ENCODE measurements at regions of chr11 and their contacts with region 1.

Region 1: GRCh38 chr11:6234387-6235107 is at the start of gene FHIP1B:
- DNase-seq: peak; percentile 97 to 100 (median 99)
- ATAC-seq: peak; percentile 90
- H3K4me3 ChIP-seq: peak within 1 kb of the TSS; percentile 90
- H3K4me3 Mint-ChIP-seq: peak within 1 kb of the TSS; percentile 98
- H3K27ac ChIP-seq: peak within 1 kb of the TSS; percentile 68 to 85
- H3K27ac Mint-ChIP-seq: peak within 1 kb of the TSS; percentile 87
- H3K4me1 ChIP-seq: peaks cover 24% of the 10 kb centered on the region
- H3K4me1 Mint-ChIP-seq: peaks cover 49% of the 10 kb centered on the region
- H3K27me3 ChIP-seq: no peaks in the 10 kb centered on the region
- H3K27me3 Mint-ChIP-seq: no peaks in the 10 kb centered on the region
- CTCF ChIP-seq: no peak
- total RNA-seq, gene FHIP1B: 26.7 to 27.7 TPM

Region 2: DNA sequence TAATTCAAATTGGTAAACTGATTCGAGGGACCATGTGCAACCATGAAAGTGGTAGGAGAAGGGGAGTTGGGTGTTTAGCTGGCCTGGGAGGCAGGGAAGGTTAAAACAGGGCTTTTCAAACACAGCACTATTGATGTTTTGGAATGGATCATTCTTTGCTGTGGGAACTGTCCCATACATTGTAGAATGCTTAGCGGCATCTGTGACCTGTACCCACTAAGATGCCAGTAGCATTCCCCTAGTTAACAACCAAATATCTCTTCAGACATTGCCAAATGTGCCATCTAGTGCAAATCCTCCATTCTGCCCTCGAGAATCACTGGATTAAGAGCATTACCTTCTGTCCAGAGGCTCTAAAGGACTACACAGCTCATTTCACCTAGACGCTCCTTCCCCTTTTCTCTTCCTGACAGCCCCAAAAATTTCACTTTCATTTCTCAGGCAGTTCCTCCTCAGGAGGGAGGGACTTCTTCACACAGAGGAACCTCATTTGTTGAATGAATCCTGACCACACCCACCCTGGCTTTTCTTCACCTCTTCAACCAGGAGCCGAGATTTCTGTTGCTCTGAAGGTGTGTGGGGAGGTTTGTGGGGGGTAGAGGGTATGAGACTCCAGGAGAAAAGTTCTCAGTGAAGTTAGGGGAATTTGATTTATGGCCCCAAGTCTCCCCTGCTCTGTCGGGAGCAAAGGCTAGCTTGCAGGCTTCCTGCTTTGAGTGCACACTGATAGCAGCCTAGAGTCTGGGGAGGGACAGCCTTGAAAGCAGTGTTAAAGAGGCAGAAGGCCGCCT is 609.9 kb before region 1 on chr11 and contains the start of gene TRIM34:
- CTCF ChIA-PET with region 1: no interaction called
- POLR2A ChIA-PET with region 1: no interaction called
- intact Hi-C with region 1: loop called in 1 of 2 experiments (anchors 10 kb)
- DNase-seq: peak; percentile 18 to 87 (median 47)
- ATAC-seq: peak; percentile 98
- H3K4me3 ChIP-seq: peak within 1 kb of the TSS; percentile 63
- H3K4me3 Mint-ChIP-seq: peak within 1 kb of the TSS; percentile 90
- H3K27ac ChIP-seq: peak within 1 kb of the TSS; percentile 43 to 50
- H3K27ac Mint-ChIP-seq: peak within 1 kb of the TSS; percentile 84
- H3K4me1 ChIP-seq: peaks cover 27% of the 10 kb centered on the region
- H3K4me1 Mint-ChIP-seq: peaks cover 53% of the 10 kb centered on the region
- H3K27me3 ChIP-seq: no peaks in the 10 kb centered on the region
- H3K27me3 Mint-ChIP-seq: no peaks in the 10 kb centered on the region
- CTCF ChIP-seq: no peak
- total RNA-seq, gene TRIM34: 3.0 to 3.5 TPM

Region 3: DNA sequence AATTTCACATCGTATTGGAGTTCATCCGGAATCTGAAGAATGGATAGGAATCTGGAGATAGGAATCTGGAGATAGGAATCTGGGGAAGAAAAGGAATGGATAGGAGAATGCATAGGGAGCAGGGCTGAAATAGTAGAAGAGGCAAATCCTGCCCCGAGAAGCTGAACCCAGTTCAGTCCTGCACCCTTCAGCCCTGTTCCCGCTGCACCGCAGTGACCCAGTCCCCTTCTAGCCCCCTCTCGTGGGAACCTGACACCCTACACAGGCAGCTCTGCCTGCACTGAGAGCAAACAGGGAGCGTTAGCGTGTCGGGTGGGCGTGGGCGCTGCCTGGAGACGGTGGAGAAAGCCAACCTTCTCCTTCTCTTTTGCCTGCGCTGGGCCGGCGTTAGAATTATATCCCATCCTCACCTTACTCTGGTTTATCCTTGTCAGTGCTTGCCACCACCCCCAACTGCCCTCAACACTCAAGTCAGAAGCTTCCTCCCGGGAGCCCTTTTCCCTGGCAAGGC is 24.1 kb after region 1 on chr11:
- CTCF ChIA-PET with region 1: no interaction called
- POLR2A ChIA-PET with region 1: interaction called, 11 read pairs
- intact Hi-C with region 1: no loop called
- DNase-seq: peak in 2 of 14 experiments; percentile 25 to 34
- ATAC-seq: peak; percentile 19
- H3K4me3 ChIP-seq: peak overlapping the region; percentile 44
- H3K4me3 Mint-ChIP-seq: peak overlapping the region; percentile 82
- H3K27ac ChIP-seq: no peak overlapping the region
- H3K27ac Mint-ChIP-seq: no peak overlapping the region
- H3K4me1 ChIP-seq: peaks cover 20% of the 10 kb centered on the region
- H3K4me1 Mint-ChIP-seq: peaks cover 5% of the 10 kb centered on the region
- H3K27me3 ChIP-seq: peaks cover 36 to 54% of the 10 kb centered on the region in 2 experiments
- H3K27me3 Mint-ChIP-seq: peaks cover 1% of the 10 kb centered on the region
- CTCF ChIP-seq: no peak

Region 4: DNA sequence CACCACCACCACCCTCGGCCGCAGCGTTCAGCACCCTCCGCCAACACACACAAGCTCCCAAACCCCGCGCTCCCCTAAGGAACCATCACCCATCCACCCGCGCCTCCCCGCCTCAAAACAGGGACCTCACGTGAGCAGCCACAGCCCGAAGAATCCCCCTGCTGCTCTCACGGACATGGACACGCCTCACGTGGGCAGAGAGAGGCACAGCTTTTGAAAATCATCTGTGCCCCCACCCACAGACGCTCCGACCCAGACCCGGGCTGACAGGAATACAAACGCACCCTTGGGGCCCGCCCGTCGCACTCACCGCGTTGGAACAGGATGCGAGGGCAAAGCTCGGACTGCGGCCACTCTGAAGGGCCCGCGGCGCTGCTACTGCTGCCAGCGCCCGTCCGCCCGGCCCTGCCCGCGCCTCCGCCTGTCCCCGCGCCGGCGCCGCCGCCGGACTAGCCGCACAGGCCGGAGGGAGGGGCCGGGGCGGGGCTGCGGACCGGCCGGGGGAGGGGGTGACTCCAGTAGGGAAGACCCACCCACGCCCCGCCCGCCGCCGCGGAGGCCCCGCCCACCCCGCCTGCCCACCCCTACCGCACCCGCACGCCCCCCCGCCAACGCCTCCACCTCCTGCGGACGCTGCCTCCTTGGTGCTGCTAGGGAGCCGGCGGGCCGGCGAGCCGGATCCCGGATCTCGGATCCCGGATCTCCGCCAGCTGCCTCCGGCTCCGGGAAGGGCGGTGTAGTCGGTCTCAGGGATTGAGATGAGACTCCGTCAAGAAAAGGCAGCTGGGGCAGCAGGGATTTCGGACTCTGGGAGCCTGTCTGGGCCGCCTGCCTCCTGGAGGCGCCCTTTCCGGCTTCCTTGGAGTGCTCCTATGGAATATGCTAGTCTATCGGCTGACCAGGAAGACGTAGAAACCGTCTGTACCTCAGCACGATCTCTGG is 239.2 kb after region 1 on chr11 and contains the start of gene TRIM3:
- CTCF ChIA-PET with region 1: no interaction called
- POLR2A ChIA-PET with region 1: no interaction called
- intact Hi-C with region 1: loop called in 1 of 2 experiments (anchors 2 kb)
- DNase-seq: peak; percentile 36 to 93 (median 69)
- ATAC-seq: peak; percentile 66
- H3K4me3 ChIP-seq: peak within 1 kb of the TSS; percentile 82
- H3K4me3 Mint-ChIP-seq: peak within 1 kb of the TSS; percentile 87
- H3K27ac ChIP-seq: peak within 1 kb of the TSS; percentile 38 to 76
- H3K27ac Mint-ChIP-seq: peak within 1 kb of the TSS; percentile 66
- H3K4me1 ChIP-seq: peaks cover 29% of the 10 kb centered on the region
- H3K4me1 Mint-ChIP-seq: peaks cover 34% of the 10 kb centered on the region
- H3K27me3 ChIP-seq: no peaks in the 10 kb centered on the region
- H3K27me3 Mint-ChIP-seq: no peaks in the 10 kb centered on the region
- CTCF ChIP-seq: no peak
- total RNA-seq, gene TRIM3: 16.4 to 16.6 TPM

Region 5: DNA sequence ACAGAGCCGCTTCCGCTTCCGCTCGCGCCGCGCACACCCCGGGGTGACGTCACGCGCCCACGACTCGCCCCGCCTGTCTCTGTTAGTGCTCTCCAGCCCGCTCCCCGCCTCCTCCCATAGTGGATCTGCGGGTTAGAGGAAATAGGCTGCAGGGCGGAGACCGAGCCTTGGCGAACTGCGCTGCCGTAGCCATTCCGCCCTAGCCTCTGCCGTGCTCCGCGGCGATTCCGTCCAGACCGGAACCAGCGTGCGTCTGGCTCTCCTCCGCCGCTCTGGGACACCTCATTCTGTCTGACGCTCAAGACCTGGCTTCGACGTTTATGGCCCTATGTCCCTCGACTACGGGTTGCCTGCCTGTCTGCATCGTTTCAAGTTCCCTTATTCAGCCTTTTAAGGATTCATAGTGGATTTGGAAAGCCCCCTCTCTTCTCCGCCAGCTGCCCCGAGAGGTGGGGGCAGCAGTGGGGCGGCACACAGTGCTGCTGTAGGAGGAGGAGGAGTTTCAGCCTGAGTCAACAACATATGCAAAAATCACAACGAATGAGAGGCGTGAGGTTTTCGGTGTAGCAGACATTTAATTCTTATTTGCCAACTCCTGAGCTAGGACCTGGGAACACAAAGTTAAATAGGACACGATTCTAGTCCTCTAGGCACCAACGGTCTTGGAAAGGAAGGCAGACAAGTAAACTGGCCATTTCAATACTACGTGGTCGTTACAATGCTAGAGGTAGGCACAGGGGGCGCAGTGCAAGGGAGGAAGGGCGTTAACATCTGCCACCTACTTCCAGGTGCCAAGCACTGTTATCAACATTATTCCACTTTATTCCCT is 377.9 kb after region 1 on chr11 and contains the start of gene TAF10:
- CTCF ChIA-PET with region 1: no interaction called
- POLR2A ChIA-PET with region 1: no interaction called
- intact Hi-C with region 1: loop called in 1 of 2 experiments (anchors 10 kb)
- DNase-seq: peak; percentile 88 to 98 (median 95)
- ATAC-seq: peak; percentile 86
- H3K4me3 ChIP-seq: peak within 1 kb of the TSS; percentile 90
- H3K4me3 Mint-ChIP-seq: peak within 1 kb of the TSS; percentile 92
- H3K27ac ChIP-seq: peak within 1 kb of the TSS; percentile 96 to 98
- H3K27ac Mint-ChIP-seq: no peak within 1 kb of the TSS
- H3K4me1 ChIP-seq: peaks cover 63% of the 10 kb centered on the region
- H3K4me1 Mint-ChIP-seq: peaks cover 35% of the 10 kb centered on the region
- H3K27me3 ChIP-seq: no peaks in the 10 kb centered on the region
- H3K27me3 Mint-ChIP-seq: no peaks in the 10 kb centered on the region
- CTCF ChIP-seq: peak; percentile 47
- total RNA-seq, gene TAF10: 154 to 164 TPM

Region 6: DNA sequence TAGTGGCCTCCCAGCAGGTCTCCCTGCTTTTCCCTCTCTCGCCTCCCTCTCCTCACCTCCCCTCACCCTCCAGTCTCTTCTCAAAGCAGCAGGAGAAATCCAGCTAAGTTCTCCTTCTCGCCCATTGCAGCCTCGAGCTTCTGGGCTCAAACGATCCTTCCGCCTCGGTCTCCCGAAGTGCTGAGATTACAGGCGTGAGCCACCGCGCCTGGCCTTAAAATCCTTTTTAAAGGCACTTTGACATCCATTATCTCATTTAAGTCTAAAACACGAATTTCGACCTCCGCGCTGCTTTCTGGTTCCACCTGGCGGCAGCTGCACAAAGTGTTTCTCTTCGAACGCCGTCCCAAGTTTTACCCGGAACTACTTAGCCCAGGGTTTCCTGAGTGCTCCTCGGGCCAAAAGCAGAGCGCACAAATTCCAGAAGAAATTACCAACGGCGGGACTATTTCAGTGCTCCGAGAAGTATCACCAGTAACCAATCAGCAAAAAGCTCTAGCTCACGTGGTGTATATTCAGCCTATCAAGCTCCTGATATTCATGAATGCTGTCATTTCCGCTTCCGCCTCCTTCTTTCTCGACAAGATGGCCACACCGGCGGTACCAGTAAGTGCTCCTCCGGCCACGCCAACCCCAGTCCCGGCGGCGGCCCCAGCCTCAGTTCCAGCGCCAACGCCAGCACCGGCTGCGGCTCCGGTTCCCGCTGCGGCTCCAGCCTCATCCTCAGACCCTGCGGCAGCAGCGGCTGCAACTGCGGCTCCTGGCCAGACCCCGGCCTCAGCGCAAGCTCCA is 1752.4 kb after region 1 on chr11 and contains the start of gene EIF3F:
- CTCF ChIA-PET with region 1: no interaction called
- POLR2A ChIA-PET with region 1: no interaction called
- intact Hi-C with region 1: loop called in 1 of 2 experiments (anchors 5 kb)
- DNase-seq: peak; percentile 78 to 99 (median 85)
- ATAC-seq: peak; percentile 95
- H3K4me3 ChIP-seq: peak within 1 kb of the TSS; percentile 67
- H3K4me3 Mint-ChIP-seq: peak within 1 kb of the TSS; percentile 88
- H3K27ac ChIP-seq: peak within 1 kb of the TSS; percentile 52 to 73
- H3K27ac Mint-ChIP-seq: peak within 1 kb of the TSS; percentile 79
- H3K4me1 ChIP-seq: peaks cover 27% of the 10 kb centered on the region
- H3K4me1 Mint-ChIP-seq: peaks cover 47% of the 10 kb centered on the region
- H3K27me3 ChIP-seq: no peaks in the 10 kb centered on the region
- H3K27me3 Mint-ChIP-seq: no peaks in the 10 kb centered on the region
- CTCF ChIP-seq: peak; percentile 92
- total RNA-seq, gene EIF3F: 338 to 348 TPM